Right ventricle myocardium superior (tissue), 1 donor: ENCODE measurements at regions of chr20 and their contacts with region 1.

Region 1: GRCh38 chr20:60057123-60057801 is 99.0 kb downstream of the CDH26 start:
- DNase-seq: peak; percentile 70
- ATAC-seq: peak; percentile 62

Region 2: DNA sequence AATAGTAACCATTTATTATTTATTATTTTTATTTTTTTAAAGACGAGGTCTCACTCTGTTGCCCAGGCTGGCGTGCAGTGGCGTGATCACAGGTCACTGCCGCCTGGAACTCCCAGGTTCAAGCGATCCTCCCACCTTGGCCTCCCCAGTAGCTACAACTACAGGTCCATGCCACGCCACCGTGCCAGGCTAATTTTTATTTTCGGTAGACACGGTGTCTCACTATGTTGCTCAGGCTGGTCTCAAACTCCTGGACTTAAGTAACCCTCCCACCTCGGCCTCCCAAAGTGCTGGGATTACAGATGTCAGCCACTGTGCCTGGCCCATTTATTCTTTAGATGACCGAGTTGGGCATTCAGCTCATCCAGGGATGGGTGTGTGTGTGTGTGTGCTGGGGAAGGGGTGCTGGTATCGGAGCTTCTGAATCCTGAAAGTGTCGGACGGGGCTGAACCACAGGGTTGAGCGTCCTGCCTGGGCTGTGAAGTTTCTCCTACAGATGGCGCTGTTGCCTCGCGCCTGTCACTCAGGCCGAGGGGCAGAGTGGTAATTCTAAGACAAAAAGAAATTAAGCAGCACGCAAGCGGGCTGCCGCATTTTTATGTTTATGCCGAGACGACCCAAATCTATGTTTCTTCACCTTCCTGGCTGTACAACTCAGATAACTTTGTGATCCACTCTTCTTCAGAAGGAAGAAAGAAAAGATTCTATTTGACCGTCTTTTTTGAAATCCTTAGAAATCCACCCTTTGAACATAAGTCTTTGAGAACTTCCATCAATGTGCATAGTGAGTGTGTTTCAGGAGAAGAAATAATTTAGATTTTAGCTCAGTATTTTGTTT is 153.7 kb after region 1 on chr20:
- intact Hi-C with region 1: loop called (anchors 10 kb)
- DNase-seq: peak; percentile 75
- ATAC-seq: peak; percentile 88

Region 3: GRCh38 chr20:60262967-60263603 is 205.8 kb after region 1 on chr20:
- intact Hi-C with region 1: loop called (anchors 10 kb)
- DNase-seq: peak; percentile 56
- ATAC-seq: no peak